Heart right ventricle (tissue), 16 donors: ENCODE measurements at regions of chr4 and their contacts with region 1.

Region 1: DNA sequence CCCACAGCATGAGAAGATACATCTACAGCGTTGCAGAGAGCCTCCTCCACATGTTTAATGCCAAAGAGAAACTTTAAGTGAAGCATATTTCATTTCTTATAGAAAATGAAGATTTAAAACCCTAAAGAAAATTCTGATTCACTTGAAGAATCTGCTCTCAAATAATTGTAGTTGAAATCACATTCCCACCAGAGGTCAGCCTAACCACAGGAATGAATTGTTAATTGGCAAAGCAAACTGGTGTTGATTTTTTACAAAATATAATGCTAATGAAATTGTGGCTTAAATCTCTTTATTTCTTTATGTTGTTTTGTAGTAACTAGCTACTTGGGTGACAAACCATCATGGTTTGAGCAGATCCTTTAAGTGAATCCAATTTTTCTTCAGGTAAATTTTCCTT is 31.1 kb upstream of the WDR17 start:
- DNase-seq: peak in 1 of 2 donors; percentile 29
- ATAC-seq: no peak
- H3K4me3 ChIP-seq: no peak overlapping the region
- H3K27ac ChIP-seq: no peak overlapping the region
- H3K4me1 ChIP-seq: no peaks in the 10 kb centered on the region
- H3K27me3 ChIP-seq: no peaks in the 10 kb centered on the region
- CTCF ChIP-seq: peak in 8 of 9 donors; percentile 12 to 61 (median 47)

Region 2: DNA sequence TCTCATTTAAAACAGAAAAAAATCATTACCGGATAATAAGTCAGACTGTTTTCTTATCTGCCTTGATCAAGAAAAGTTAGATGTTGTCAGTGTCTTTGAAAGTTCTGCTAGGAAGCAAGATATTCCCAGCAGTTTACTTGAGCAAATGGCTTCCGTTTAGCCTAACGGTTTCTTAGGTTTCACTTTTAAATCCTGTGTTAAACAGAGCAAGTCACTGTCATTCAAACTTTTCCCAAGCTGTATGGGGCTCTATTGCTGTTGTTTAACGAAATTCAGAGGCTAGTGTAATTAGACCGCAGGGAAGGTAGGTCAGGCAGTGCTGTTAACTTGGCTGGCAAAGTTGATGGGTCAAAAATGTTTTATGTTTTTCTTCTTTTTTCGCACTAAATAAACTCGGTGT is 1194.8 kb after region 1 on chr4:
- intact Hi-C with region 1: loop called in 1 of 10 experiments (anchors 5 kb)
- DNase-seq: no peak
- ATAC-seq: no peak
- H3K4me3 ChIP-seq: peak overlapping the region in 6 of 10 donors; percentile 26 to 46 (median 28)
- H3K27ac ChIP-seq: no peak overlapping the region
- H3K4me1 ChIP-seq: peaks cover 0 to 7% (median 0%) of the 10 kb centered on the region in 9 donors
- H3K27me3 ChIP-seq: no peaks in the 10 kb centered on the region
- CTCF ChIP-seq: no peak